ENCODE measurements at regions of chr19 and their contacts with region 1.

Region 1: DNA sequence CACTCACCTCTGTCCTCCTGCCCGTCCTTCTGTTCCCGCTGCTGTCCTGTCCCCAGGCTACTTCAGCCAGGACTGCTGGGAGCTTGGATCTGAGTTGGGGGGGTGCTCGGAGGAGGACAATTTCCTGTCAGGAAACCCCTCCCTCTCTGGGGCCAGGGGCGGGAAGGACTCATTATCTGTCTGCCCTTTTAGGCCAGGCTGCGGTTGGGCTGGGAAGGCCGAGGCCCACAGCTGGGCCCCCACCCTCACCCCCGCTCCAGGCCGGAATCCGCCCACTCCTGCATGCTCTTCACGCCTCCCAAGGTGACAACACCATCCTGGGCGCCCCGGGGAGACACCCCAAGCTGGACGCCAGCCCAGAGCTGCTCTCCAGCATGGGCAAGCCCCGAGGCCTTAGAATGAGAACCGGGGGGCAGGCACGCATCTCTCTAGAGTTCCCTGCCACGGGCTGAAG is at the start of gene EXOC3L2:
- DNase-seq: no peak
- H3K4me3 Mint-ChIP-seq: no peak within 1 kb of the TSS
- H3K27ac Mint-ChIP-seq: peak within 1 kb of the TSS; percentile 16
- H3K4me1 Mint-ChIP-seq: no peaks in the 10 kb centered on the region
- H3K27me3 Mint-ChIP-seq: peaks cover 10% of the 10 kb centered on the region
- CTCF ChIP-seq: no peak
- total RNA-seq, gene EXOC3L2: not detected in 2 replicates

Region 2: GRCh38 chr19:45164577-45165335 is 80.6 kb before region 1 on chr19:
- CTCF ChIA-PET with region 1: interaction called, 3 read pairs
- POLR2A ChIA-PET with region 1: interaction called, 4 read pairs
- intact Hi-C with region 1: loop called (anchors 5 kb)
- DNase-seq: peak; percentile 95
- H3K4me3 Mint-ChIP-seq: no peak overlapping the region
- H3K27ac Mint-ChIP-seq: no peak overlapping the region
- H3K4me1 Mint-ChIP-seq: peaks cover 27% of the 10 kb centered on the region
- H3K27me3 Mint-ChIP-seq: no peaks in the 10 kb centered on the region
- CTCF ChIP-seq: no peak

Region 3: DNA sequence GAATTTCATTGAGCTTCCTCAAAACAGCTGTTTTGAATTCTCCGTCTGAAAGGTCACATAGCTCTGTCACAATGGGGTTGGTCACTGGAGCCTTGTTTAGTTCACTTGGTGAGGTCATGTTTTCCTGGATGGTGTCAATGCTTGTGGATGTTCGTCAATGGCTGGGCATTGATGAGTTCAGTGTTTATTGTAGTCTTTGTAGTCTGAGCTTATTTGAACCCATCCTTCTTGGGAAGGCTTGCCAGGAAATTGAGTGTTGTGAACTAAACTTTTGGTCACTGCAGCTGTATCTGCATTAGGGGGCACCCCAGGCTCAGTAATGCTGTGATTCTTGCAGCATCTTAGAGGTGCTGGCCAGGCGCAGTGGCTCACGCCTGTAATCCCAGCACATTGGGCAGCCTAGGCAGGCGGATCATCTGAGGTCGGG is 44.8 kb before region 1 on chr19:
- CTCF ChIA-PET with region 1: interaction called, 4 read pairs
- POLR2A ChIA-PET with region 1: no interaction called
- intact Hi-C with region 1: loop called (anchors 5 kb)
- DNase-seq: peak; percentile 55
- H3K4me3 Mint-ChIP-seq: no peak overlapping the region
- H3K27ac Mint-ChIP-seq: no peak overlapping the region
- H3K4me1 Mint-ChIP-seq: peaks cover 21% of the 10 kb centered on the region
- H3K27me3 Mint-ChIP-seq: peaks cover 11% of the 10 kb centered on the region
- CTCF ChIP-seq: peak; percentile 18